H1 (cell line): ENCODE measurements at regions of chr3 and their contacts with region 1.

Region 1: DNA sequence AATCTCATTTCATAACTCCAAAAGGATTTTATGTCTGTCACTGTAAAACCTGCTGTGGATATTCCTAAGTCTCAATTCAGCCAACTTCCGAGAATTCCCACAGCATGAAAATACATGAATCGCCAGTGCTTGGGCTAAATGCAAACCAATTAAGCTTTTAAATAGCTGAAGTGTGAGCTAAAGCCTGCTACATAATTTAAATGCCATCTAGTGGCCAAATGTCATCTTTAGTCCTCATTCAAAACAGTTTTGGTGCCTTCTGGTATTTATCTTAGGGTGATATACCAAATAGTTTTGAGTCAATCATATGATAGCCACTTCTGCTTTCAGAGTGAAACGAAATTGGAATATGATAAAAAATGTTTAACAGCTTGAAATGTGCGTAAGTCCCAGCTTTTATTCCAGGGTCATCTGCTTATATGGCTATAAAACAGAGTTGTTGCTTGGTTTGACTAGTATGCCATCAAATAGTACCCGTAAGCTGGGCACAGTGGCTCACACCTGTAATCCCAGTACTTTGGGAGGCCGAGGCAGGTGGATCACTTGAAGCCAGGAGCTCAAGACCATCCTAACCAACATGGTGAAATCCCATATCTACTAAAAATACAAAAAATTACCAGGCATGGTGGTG is 41.8 kb upstream of the CCNL1 start:
- DNase-seq: no peak
- H3K4me3 ChIP-seq: no peak overlapping the region
- H3K27ac ChIP-seq: no peak overlapping the region
- H3K4me1 ChIP-seq: no peaks in the 10 kb centered on the region
- H3K27me3 ChIP-seq: no peaks in the 10 kb centered on the region
- CTCF ChIP-seq: peak in 2 of 3 experiments; percentile 16 to 47; a peak in 2 of 4 replicates
- EP300 ChIP-seq: no peak
- POLR2A ChIP-seq: no peak
- RAD21 ChIP-seq: peak; percentile 46 to 47

Region 2: GRCh38 chr3:157159762-157160657 is 41.8 kb before region 1 on chr3 and contains the start of gene CCNL1:
- CTCF ChIA-PET with region 1: interaction called, 39 read pairs
- POLR2A ChIA-PET with region 1: interaction called, 6 read pairs
- DNase-seq: peak; percentile 76 to 94
- H3K4me3 ChIP-seq: peak within 1 kb of the TSS; percentile 60 to 91 (median 88)
- H3K27ac ChIP-seq: peak within 1 kb of the TSS; percentile 98
- H3K4me1 ChIP-seq: peaks cover 0 to 4% (median 2%) of the 10 kb centered on the region in 4 experiments; a peak in 6 of 7 replicates
- H3K27me3 ChIP-seq: no peaks in the 10 kb centered on the region
- CTCF ChIP-seq: no peak
- EP300 ChIP-seq: peak in 1 of 2 experiments; percentile 89; a peak in 1 of 3 replicates
- POLR2A ChIP-seq: peak; percentile 98 to 99
- RAD21 ChIP-seq: peak in 1 of 2 experiments; percentile 17; a peak in 1 of 4 replicates
- total RNA-seq, gene CCNL1: 61.2 and 68.6 TPM in 2 replicates

Region 3: GRCh38 chr3:157182881-157183280 is 18.9 kb before region 1 on chr3:
- CTCF ChIA-PET with region 1: interaction called, 10 read pairs
- POLR2A ChIA-PET with region 1: no interaction called
- DNase-seq: no peak
- H3K4me3 ChIP-seq: no peak overlapping the region
- H3K27ac ChIP-seq: no peak overlapping the region
- H3K4me1 ChIP-seq: no peaks in the 10 kb centered on the region
- H3K27me3 ChIP-seq: no peaks in the 10 kb centered on the region; a peak in 1 of 7 replicates
- CTCF ChIP-seq: peak in 1 of 3 experiments; percentile 1; a peak in 1 of 4 replicates
- EP300 ChIP-seq: no peak
- POLR2A ChIP-seq: no peak
- RAD21 ChIP-seq: no peak

Region 4: DNA sequence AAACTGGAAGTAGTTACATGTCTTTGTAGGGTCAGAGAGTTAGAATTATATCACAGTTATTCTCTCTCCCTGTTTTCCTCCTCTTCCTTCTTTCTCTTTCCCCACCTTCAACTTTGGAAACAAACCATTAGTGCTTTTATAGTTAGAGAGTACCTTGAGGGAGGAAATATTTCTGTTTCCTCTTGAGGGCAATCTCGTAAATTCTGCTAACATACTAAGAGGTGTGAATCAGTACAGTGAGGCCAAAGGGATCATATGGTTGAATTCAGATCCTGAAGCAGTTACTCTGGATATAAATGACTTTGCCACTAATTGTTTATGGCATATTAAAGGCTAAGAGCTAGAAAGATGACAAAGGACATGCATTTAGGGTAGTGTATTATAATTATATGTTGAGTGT is 18.4 kb after region 1 on chr3:
- CTCF ChIA-PET with region 1: interaction called, 14 read pairs
- POLR2A ChIA-PET with region 1: no interaction called
- DNase-seq: no peak
- H3K4me3 ChIP-seq: no peak overlapping the region
- H3K27ac ChIP-seq: no peak overlapping the region
- H3K4me1 ChIP-seq: no peaks in the 10 kb centered on the region
- H3K27me3 ChIP-seq: no peaks in the 10 kb centered on the region
- CTCF ChIP-seq: no peak
- EP300 ChIP-seq: no peak
- POLR2A ChIP-seq: no peak
- RAD21 ChIP-seq: no peak

Region 5: GRCh38 chr3:157239082-157239704 is 37.4 kb after region 1 on chr3:
- CTCF ChIA-PET with region 1: interaction called, 21 read pairs
- POLR2A ChIA-PET with region 1: no interaction called
- DNase-seq: peak; percentile 34 to 86
- H3K4me3 ChIP-seq: no peak overlapping the region
- H3K27ac ChIP-seq: no peak overlapping the region
- H3K4me1 ChIP-seq: no peaks in the 10 kb centered on the region
- H3K27me3 ChIP-seq: no peaks in the 10 kb centered on the region
- CTCF ChIP-seq: peak; percentile 88 to 95 (median 94)
- EP300 ChIP-seq: no peak
- POLR2A ChIP-seq: no peak
- RAD21 ChIP-seq: peak; percentile 94

Region 6: DNA sequence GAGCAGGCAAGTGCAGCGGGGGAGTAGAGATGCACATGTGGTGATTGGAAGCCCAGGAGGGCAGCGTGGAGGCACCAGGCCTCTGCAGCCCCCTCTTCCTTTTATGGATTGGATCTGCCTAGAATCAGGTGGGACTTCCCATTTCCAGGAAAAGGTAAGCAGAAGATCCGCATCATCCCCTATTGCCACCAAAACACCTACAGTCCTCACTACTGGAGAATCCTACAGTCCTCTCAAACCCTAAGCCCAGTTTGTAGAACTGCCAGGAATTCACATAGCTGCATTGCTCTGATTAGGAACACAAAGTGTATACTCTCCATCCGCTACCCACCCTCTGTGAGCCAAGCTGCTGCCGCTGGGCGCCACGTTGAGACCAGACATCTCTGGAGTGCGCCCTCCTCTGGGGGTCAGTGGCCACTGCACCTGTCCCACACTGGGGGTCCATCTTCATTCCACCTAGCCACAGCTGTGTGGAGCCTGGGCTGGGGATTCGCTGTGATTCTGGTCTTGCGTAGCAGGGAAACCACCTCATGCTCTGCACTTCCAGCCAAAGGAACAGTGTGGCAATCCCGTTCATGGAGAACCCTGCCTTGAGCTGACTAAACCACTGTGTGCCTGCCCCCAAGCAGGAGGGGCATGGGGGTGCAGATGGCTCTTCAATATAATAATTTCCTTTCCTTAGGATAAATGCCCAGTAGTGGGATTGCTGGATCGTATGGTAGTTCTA is 146.0 kb after region 1 on chr3:
- CTCF ChIA-PET with region 1: interaction called, 44 read pairs
- POLR2A ChIA-PET with region 1: no interaction called
- DNase-seq: peak; percentile 43 to 95
- H3K4me3 ChIP-seq: no peak overlapping the region
- H3K27ac ChIP-seq: no peak overlapping the region
- H3K4me1 ChIP-seq: no peaks in the 10 kb centered on the region; a peak in 1 of 7 replicates
- H3K27me3 ChIP-seq: no peaks in the 10 kb centered on the region
- CTCF ChIP-seq: peak; percentile 88 to 99 (median 97)
- EP300 ChIP-seq: no peak
- POLR2A ChIP-seq: no peak
- RAD21 ChIP-seq: peak; percentile 70 to 81

Region 7: DNA sequence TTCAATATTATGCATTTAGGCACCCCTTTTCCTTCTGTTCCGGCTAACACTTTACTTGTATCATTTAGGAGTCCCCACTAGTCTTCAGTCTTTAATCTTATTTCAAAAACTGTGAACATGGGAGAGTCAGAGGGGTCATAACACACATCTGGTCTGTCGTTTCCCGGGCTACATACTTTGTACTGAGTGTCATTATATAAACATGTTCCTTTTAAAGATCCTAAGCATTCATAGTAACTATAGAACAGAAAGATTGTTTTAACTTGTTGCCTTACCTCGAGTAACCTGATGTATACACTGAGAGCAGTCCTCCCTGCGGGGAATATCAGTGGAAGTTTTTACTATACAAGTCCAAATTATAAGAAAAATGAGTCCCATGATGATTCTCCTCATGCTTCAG is 379.6 kb after region 1 on chr3:
- CTCF ChIA-PET with region 1: no interaction called
- POLR2A ChIA-PET with region 1: no interaction called
- DNase-seq: no peak
- H3K4me3 ChIP-seq: no peak overlapping the region
- H3K27ac ChIP-seq: no peak overlapping the region
- H3K4me1 ChIP-seq: no peaks in the 10 kb centered on the region
- H3K27me3 ChIP-seq: no peaks in the 10 kb centered on the region
- CTCF ChIP-seq: no peak
- EP300 ChIP-seq: no peak
- POLR2A ChIP-seq: no peak
- RAD21 ChIP-seq: no peak